Activated naive CD8-positive, alpha-beta T cell treated with anti-CD3 and anti-CD28 coated beads, Interleukin-2, amount 10 ng/mL, durations not matched to agents 7 days and 5 days (primary cell): ENCODE measurements at regions of chr1 and their contacts with region 1.

Region 1: GRCh38 chr1:16904560-16905111 is 8.9 kb downstream of the RNU1-2 start:
- DNase-seq: peak; percentile 95
- ATAC-seq: peak; percentile 93
- H3K4me3 Mint-ChIP-seq: no peak overlapping the region
- H3K27ac Mint-ChIP-seq: no peak overlapping the region
- H3K4me1 Mint-ChIP-seq: peaks cover 34% of the 10 kb centered on the region
- H3K27me3 Mint-ChIP-seq: no peaks in the 10 kb centered on the region

Region 2: GRCh38 chr1:16888860-16889816 is 15.5 kb before region 1 on chr1:
- POLR2A ChIA-PET with region 1: interaction called, 14 read pairs
- DNase-seq: peak; percentile 64
- ATAC-seq: peak; percentile 69
- H3K4me3 Mint-ChIP-seq: peak overlapping the region; percentile 87
- H3K27ac Mint-ChIP-seq: peak overlapping the region; percentile 56
- H3K4me1 Mint-ChIP-seq: peaks cover 9% of the 10 kb centered on the region
- H3K27me3 Mint-ChIP-seq: peaks cover 61% of the 10 kb centered on the region

Region 3: GRCh38 chr1:16921391-16922185 is 17.0 kb after region 1 on chr1 and contains the start of gene CROCC:
- POLR2A ChIA-PET with region 1: interaction called, 15 read pairs
- DNase-seq: peak; percentile 76
- ATAC-seq: peak; percentile 91
- H3K4me3 Mint-ChIP-seq: peak within 1 kb of the TSS; percentile 89
- H3K27ac Mint-ChIP-seq: peak within 1 kb of the TSS; percentile 89
- H3K4me1 Mint-ChIP-seq: peaks cover 24% of the 10 kb centered on the region
- H3K27me3 Mint-ChIP-seq: no peaks in the 10 kb centered on the region
- total RNA-seq, gene CROCC: 63.0 to 69.8 TPM

Region 4: GRCh38 chr1:16944038-16944437 is 39.4 kb after region 1 on chr1:
- POLR2A ChIA-PET with region 1: no interaction called
- DNase-seq: no peak
- ATAC-seq: no peak
- H3K4me3 Mint-ChIP-seq: no peak overlapping the region
- H3K27ac Mint-ChIP-seq: no peak overlapping the region
- H3K4me1 Mint-ChIP-seq: no peaks in the 10 kb centered on the region
- H3K27me3 Mint-ChIP-seq: no peaks in the 10 kb centered on the region